HepG2 (cell line): ENCODE measurements at regions of chr17 and their contacts with region 1.

Region 1: GRCh38 chr17:27353461-27354050 is 59.6 kb downstream of the WSB1 start:
- DNase-seq: peak; percentile 87
- ATAC-seq: peak; percentile 96
- H3K4me3 ChIP-seq: peak overlapping the region; percentile 76 to 94 (median 82)
- H3K27ac ChIP-seq: peak overlapping the region; percentile 75
- H3K4me1 ChIP-seq: peaks cover 23% of the 10 kb centered on the region
- H3K27me3 ChIP-seq: peaks cover 0 to 1% of the 10 kb centered on the region in 2 experiments; a peak in 2 of 5 replicates
- CTCF ChIP-seq: peak; percentile 75
- EP300 ChIP-seq: peak; percentile 11 to 21; a peak in 1 of 4 replicates
- POLR2A ChIP-seq: peak; percentile 68 to 87; a peak in 3 of 4 replicates
- RAD21 ChIP-seq: peak; percentile 93

Region 2: GRCh38 chr17:27236717-27237315 is 116.7 kb before region 1 on chr17:
- CTCF ChIA-PET with region 1: no interaction called
- POLR2A ChIA-PET with region 1: no interaction called
- in situ Hi-C with region 1: loop called (anchors 10 kb)
- intact Hi-C with region 1: no loop called
- DNase-seq: peak; percentile 63
- ATAC-seq: peak; percentile 60; the same call in 2 of the 3 replicates
- H3K4me3 ChIP-seq: no peak overlapping the region
- H3K27ac ChIP-seq: no peak overlapping the region
- H3K4me1 ChIP-seq: peaks cover 19% of the 10 kb centered on the region
- H3K27me3 ChIP-seq: peaks cover 2 to 24% of the 10 kb centered on the region in 2 experiments; a peak in 3 of 5 replicates
- CTCF ChIP-seq: peak; percentile 74
- EP300 ChIP-seq: no peak
- POLR2A ChIP-seq: no peak
- RAD21 ChIP-seq: peak; percentile 66

Region 3: DNA sequence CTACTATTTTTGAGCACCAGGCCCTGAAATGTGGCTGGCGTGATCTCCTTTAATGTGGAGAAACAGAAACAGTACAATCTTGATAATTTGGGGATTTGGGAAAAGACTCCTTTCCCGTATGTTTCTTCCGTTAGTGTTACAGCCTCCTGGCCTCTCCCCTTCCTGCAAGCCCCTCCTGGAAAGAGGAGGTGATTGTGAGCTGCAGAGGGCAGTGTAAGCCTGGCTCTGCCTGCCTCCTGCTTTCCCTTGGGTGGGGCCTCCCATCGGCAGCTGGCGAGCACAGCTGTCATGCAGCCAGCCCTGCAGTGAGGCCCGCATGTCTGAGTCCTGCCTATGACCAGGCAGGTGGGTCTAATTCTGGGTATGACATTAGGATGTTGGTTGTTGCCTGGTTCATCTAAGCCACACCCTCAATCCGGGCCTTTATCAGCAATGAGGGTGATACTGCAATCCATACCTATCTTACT is 108.3 kb before region 1 on chr17:
- CTCF ChIA-PET with region 1: no interaction called
- POLR2A ChIA-PET with region 1: no interaction called
- in situ Hi-C with region 1: no loop called
- intact Hi-C with region 1: loop called (anchors 1 kb)
- DNase-seq: peak; percentile 80
- ATAC-seq: peak; percentile 97
- H3K4me3 ChIP-seq: peak overlapping the region in 2 of 3 experiments; percentile 29 to 41; a peak in 1 of 6 replicates
- H3K27ac ChIP-seq: no peak overlapping the region
- H3K4me1 ChIP-seq: peaks cover 36% of the 10 kb centered on the region
- H3K27me3 ChIP-seq: peaks cover 3 to 11% of the 10 kb centered on the region in 2 experiments; a peak in 3 of 5 replicates
- CTCF ChIP-seq: peak; percentile 97
- EP300 ChIP-seq: no peak
- POLR2A ChIP-seq: no peak
- RAD21 ChIP-seq: peak; percentile 94

Region 4: GRCh38 chr17:27367121-27367991 is 13.8 kb after region 1 on chr17:
- CTCF ChIA-PET with region 1: no interaction called
- POLR2A ChIA-PET with region 1: no interaction called
- in situ Hi-C with region 1: no loop called
- intact Hi-C with region 1: no loop called
- DNase-seq: no peak
- ATAC-seq: peak; percentile 79
- H3K4me3 ChIP-seq: peak overlapping the region in 1 of 3 experiments; percentile 49; a peak in 2 of 6 replicates
- H3K27ac ChIP-seq: no peak overlapping the region
- H3K4me1 ChIP-seq: peaks cover 20% of the 10 kb centered on the region
- H3K27me3 ChIP-seq: peaks cover 3 to 28% of the 10 kb centered on the region in 2 experiments
- CTCF ChIP-seq: no peak
- EP300 ChIP-seq: no peak
- POLR2A ChIP-seq: no peak
- RAD21 ChIP-seq: no peak

Region 5: DNA sequence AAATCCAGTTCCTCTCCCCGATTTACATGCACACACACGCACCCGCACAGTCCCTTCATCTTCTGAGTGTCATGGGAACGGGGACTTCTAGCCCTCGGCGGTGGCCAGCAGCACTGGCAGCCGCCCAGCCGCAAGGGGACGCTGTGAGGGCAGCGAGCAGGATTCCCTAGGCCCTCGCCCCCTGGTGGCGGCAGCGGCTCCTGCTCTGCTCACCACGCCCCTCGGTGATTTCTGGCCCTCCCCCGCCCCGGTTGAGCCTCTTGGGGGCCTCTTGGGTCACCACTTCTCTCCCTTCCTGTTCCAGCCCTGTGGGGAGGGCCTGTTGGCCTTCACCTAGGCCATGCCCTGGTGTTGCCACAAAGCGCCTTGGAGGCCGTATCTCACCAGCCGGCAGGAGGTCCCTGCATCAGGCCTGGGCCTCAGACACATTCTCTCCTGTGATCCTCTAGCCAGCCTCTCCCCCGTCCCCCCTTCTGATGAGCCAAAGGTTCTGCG is 27.5 kb after region 1 on chr17:
- CTCF ChIA-PET with region 1: interaction called, 34 read pairs
- POLR2A ChIA-PET with region 1: interaction called, 3 read pairs
- in situ Hi-C with region 1: no loop called
- intact Hi-C with region 1: loop called (anchors 1 kb)
- DNase-seq: peak; percentile 75
- ATAC-seq: peak; percentile 96
- H3K4me3 ChIP-seq: peak overlapping the region in 1 of 3 experiments; percentile 51; a peak in 1 of 6 replicates
- H3K27ac ChIP-seq: no peak overlapping the region
- H3K4me1 ChIP-seq: peaks cover 28% of the 10 kb centered on the region
- H3K27me3 ChIP-seq: peaks cover 0 to 6% of the 10 kb centered on the region in 2 experiments; a peak in 2 of 5 replicates
- CTCF ChIP-seq: peak; percentile 99
- EP300 ChIP-seq: peak in 1 of 2 experiments; percentile 18; a peak in 1 of 4 replicates
- POLR2A ChIP-seq: no peak
- RAD21 ChIP-seq: peak; percentile 95

Region 6: GRCh38 chr17:27455914-27456680 is 102.5 kb after region 1 on chr17 and contains the start of gene KSR1:
- CTCF ChIA-PET with region 1: no interaction called
- POLR2A ChIA-PET with region 1: no interaction called
- in situ Hi-C with region 1: no loop called
- intact Hi-C with region 1: loop called (anchors 5 kb)
- DNase-seq: peak; percentile 60
- ATAC-seq: peak; percentile 80
- H3K4me3 ChIP-seq: peak within 1 kb of the TSS; percentile 83 to 87 (median 84)
- H3K27ac ChIP-seq: peak within 1 kb of the TSS; percentile 82
- H3K4me1 ChIP-seq: peaks cover 40% of the 10 kb centered on the region
- H3K27me3 ChIP-seq: peaks cover 2 to 21% of the 10 kb centered on the region in 2 experiments; a peak in 3 of 5 replicates
- CTCF ChIP-seq: peak; percentile 77
- EP300 ChIP-seq: no peak
- POLR2A ChIP-seq: peak; percentile 43 to 76; a peak in 2 of 4 replicates
- RAD21 ChIP-seq: peak; percentile 71
- total RNA-seq, gene KSR1: 8.0 and 10.1 TPM in 2 replicates

Region 7: DNA sequence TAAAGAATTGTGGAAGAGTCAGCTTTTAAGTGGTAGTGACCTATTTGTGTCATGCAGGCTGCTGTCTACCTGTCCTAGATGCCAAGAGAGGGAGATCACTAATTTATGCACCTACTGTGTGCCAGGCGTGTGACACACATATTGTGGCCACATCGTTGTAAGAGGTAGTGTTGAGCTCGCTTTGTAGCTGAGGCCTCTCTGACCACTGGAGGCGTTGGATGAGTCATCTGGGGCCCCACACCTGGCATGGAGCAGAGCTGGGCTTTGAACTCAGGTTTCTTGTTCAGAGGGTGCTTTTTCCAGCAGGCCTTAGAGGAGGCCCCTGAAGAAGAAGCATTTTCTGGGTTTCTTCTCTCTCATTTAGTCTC is 225.1 kb after region 1 on chr17:
- CTCF ChIA-PET with region 1: interaction called, 3 read pairs
- POLR2A ChIA-PET with region 1: no interaction called
- in situ Hi-C with region 1: loop called (anchors 10 kb)
- intact Hi-C with region 1: no loop called
- DNase-seq: peak; percentile 45
- ATAC-seq: peak; percentile 67
- H3K4me3 ChIP-seq: no peak overlapping the region
- H3K27ac ChIP-seq: no peak overlapping the region
- H3K4me1 ChIP-seq: peaks cover 68% of the 10 kb centered on the region
- H3K27me3 ChIP-seq: no peaks in the 10 kb centered on the region
- CTCF ChIP-seq: peak; percentile 22; the same call in 1 of the 2 replicates
- EP300 ChIP-seq: no peak
- POLR2A ChIP-seq: no peak
- RAD21 ChIP-seq: no peak